H1 (cell line): ENCODE measurements at regions of chr13 and their contacts with region 1.

Region 1: GRCh38 chr13:27953676-27954405 is 15.3 kb downstream of the CDX2 start:
- DNase-seq: peak in 1 of 2 experiments; percentile 95
- H3K4me3 ChIP-seq: peak overlapping the region; percentile 5 to 61 (median 42)
- H3K27ac ChIP-seq: no peak overlapping the region
- H3K4me1 ChIP-seq: peaks cover 0 to 5% (median 3%) of the 10 kb centered on the region in 4 experiments; a peak in 4 of 7 replicates
- H3K27me3 ChIP-seq: peaks cover 57 to 86% (median 73%) of the 10 kb centered on the region in 4 experiments
- CTCF ChIP-seq: peak; percentile 90 to 97 (median 93)
- EP300 ChIP-seq: 0 out of 3 replicates have a peak, but pooled peaks of 1 of the 2 experiments have one; percentile 64
- POLR2A ChIP-seq: no peak
- RAD21 ChIP-seq: peak; percentile 91 to 93

Region 2: GRCh38 chr13:27792393-27793218 is 161.2 kb before region 1 on chr13 and contains the start of gene GSX1:
- CTCF ChIA-PET with region 1: interaction called, 11 read pairs
- POLR2A ChIA-PET with region 1: no interaction called
- DNase-seq: peak; percentile 63 to 87
- H3K4me3 ChIP-seq: peak within 1 kb of the TSS in 1 of 4 experiments; percentile 54; a peak in 3 of 8 replicates
- H3K27ac ChIP-seq: no peak within 1 kb of the TSS
- H3K4me1 ChIP-seq: peaks cover 10 to 55% (median 35%) of the 10 kb centered on the region in 4 experiments
- H3K27me3 ChIP-seq: peaks cover 95 to 100% (median 100%) of the 10 kb centered on the region in 4 experiments
- CTCF ChIP-seq: no peak
- EP300 ChIP-seq: no peak
- POLR2A ChIP-seq: no peak
- RAD21 ChIP-seq: peak in 1 of 2 experiments; percentile 4; a peak in 1 of 4 replicates
- total RNA-seq, gene GSX1: not detected in 2 replicates

Region 3: GRCh38 chr13:27868641-27869435 is 85.0 kb before region 1 on chr13:
- CTCF ChIA-PET with region 1: interaction called, 22 read pairs
- POLR2A ChIA-PET with region 1: no interaction called
- DNase-seq: no peak
- H3K4me3 ChIP-seq: no peak overlapping the region
- H3K27ac ChIP-seq: no peak overlapping the region
- H3K4me1 ChIP-seq: no peaks in the 10 kb centered on the region
- H3K27me3 ChIP-seq: no peaks in the 10 kb centered on the region; a peak in 1 of 7 replicates
- CTCF ChIP-seq: peak in 2 of 3 experiments; percentile 33 to 41; a peak in 2 of 4 replicates
- EP300 ChIP-seq: no peak
- POLR2A ChIP-seq: no peak
- RAD21 ChIP-seq: peak; percentile 34 to 39; a peak in 3 of 4 replicates

Region 4: GRCh38 chr13:27926644-27927434 is 27.0 kb before region 1 on chr13:
- CTCF ChIA-PET with region 1: interaction called, 22 read pairs
- POLR2A ChIA-PET with region 1: interaction called, 3 read pairs
- DNase-seq: peak in 1 of 2 experiments; percentile 55
- H3K4me3 ChIP-seq: no peak overlapping the region
- H3K27ac ChIP-seq: no peak overlapping the region
- H3K4me1 ChIP-seq: peaks cover 0 to 18% (median 14%) of the 10 kb centered on the region in 4 experiments; a peak in 5 of 7 replicates
- H3K27me3 ChIP-seq: peaks cover 97 to 100% (median 99%) of the 10 kb centered on the region in 4 experiments
- CTCF ChIP-seq: no peak
- EP300 ChIP-seq: no peak
- POLR2A ChIP-seq: no peak
- RAD21 ChIP-seq: no peak

Region 5: GRCh38 chr13:27977476-27978300 is 23.8 kb after region 1 on chr13:
- CTCF ChIA-PET with region 1: interaction called, 283 read pairs
- POLR2A ChIA-PET with region 1: interaction called, 3 read pairs
- DNase-seq: peak in 1 of 2 experiments; percentile 72
- H3K4me3 ChIP-seq: peak overlapping the region in 1 of 4 experiments; percentile 28; a peak in 1 of 8 replicates
- H3K27ac ChIP-seq: no peak overlapping the region
- H3K4me1 ChIP-seq: peaks cover 0 to 13% (median 5%) of the 10 kb centered on the region in 4 experiments; a peak in 5 of 7 replicates
- H3K27me3 ChIP-seq: peaks cover 97 to 100% (median 100%) of the 10 kb centered on the region in 4 experiments
- CTCF ChIP-seq: no peak
- EP300 ChIP-seq: peak in 1 of 2 experiments; percentile 50; a peak in 1 of 3 replicates
- POLR2A ChIP-seq: no peak
- RAD21 ChIP-seq: no peak

Region 6: DNA sequence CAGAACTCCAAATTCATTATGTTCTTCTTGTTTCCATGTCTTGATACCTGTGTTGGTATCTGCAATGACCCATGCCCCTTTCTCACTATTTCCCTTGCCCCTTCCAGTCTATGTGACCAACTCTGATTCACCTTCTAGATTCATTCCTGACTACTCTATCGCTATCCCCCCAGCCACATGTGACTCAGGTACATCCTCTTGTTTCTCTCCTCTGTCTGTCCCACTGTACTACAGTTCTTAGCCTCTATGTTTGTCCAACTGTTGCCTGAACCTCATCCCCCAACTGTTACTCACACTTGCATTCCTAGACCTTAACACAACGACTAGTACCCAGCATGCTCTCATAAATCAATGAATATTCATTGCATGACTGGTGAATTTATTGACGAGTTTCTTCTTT is 156.6 kb after region 1 on chr13:
- CTCF ChIA-PET with region 1: no interaction called
- POLR2A ChIA-PET with region 1: no interaction called
- DNase-seq: no peak
- H3K4me3 ChIP-seq: no peak overlapping the region
- H3K27ac ChIP-seq: no peak overlapping the region
- H3K4me1 ChIP-seq: no peaks in the 10 kb centered on the region; a peak in 1 of 7 replicates
- H3K27me3 ChIP-seq: no peaks in the 10 kb centered on the region; a peak in 1 of 7 replicates
- CTCF ChIP-seq: no peak
- EP300 ChIP-seq: no peak
- POLR2A ChIP-seq: no peak
- RAD21 ChIP-seq: no peak